A549 (cell line): ENCODE measurements at regions of chr19 and their contacts with region 1.

Region 1: DNA sequence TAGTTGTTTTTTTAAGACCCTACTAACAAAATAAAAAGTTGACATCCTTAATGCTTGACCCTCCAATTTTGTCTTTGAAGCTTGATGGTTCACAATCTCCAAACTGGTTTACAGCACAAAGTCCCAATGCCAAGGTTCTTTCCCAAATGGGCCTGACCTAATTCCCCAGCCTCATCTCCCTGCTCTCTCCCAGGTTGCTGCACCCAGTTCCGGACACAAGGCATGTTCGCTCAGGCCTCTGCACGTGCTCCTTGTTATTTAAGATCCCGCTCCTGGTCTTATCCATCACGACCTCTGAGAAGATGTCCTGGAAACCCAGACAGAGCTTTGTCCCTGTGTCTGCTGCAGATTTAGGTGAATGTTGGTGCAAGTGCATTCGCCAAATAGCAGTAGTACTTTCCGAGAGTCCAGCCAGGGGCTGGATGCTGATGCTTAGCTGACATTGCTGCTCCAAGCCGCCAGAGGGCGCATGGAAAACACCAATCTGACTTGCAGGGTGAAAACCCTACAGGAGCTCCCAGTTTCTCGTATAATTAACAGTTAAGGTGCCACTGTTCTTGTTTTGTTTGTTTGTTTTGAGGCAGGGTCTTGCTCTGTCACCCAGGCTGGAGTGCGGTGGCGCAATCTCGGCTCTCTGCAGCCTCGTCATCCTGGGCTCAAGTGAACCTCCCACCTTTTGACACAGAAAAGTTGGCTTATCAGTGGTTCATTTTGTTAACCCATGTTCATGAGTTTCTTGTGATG is 18.5 kb downstream of the LYPD3 start:
- DNase-seq: peak; percentile 80 to 86
- ATAC-seq: peak; percentile 95 to 96
- H3K4me3 ChIP-seq: no peak overlapping the region
- H3K27ac ChIP-seq: no peak overlapping the region
- H3K4me1 ChIP-seq: no peaks in the 10 kb centered on the region
- CTCF ChIP-seq: peak; percentile 98
- EP300 ChIP-seq: no peak
- POLR2A ChIP-seq: no peak
- RAD21 ChIP-seq: peak; percentile 95 to 96

Region 2: DNA sequence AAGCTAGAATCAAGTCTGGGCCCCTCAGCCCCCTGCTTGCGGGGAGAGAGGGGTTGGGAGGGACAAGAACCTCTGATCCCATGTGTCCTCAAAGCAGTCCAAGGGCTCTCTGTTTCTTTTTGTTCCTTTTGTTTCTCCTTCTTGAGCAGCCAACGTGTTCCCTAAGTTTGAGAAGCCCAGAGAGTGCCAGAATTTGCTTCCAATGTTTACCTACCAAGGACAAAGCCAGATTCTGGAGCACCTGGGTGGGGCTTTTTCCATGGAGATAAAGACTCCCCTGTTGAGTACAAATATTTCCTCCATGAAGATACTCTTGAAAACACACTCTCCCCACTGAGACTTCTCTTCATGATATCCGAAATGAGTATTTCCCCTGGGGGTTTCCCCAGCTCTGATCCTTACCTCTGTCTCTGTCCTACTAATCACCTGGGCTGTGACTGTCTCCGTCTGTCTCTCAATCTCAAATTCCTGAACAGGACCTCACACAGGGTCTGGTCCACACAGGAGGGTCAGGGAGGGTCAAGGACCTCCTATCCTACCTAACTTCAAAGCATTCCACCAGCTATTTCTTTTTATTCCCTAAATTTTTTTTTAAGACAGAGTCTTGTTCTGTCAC is 66.0 kb before region 1 on chr19:
- CTCF ChIA-PET with region 1: no interaction called
- POLR2A ChIA-PET with region 1: no interaction called
- DNase-seq: no peak
- ATAC-seq: no peak
- H3K4me3 ChIP-seq: no peak overlapping the region
- H3K27ac ChIP-seq: no peak overlapping the region
- H3K4me1 ChIP-seq: no peaks in the 10 kb centered on the region
- CTCF ChIP-seq: no peak
- EP300 ChIP-seq: no peak
- POLR2A ChIP-seq: no peak
- RAD21 ChIP-seq: no peak

Region 3: DNA sequence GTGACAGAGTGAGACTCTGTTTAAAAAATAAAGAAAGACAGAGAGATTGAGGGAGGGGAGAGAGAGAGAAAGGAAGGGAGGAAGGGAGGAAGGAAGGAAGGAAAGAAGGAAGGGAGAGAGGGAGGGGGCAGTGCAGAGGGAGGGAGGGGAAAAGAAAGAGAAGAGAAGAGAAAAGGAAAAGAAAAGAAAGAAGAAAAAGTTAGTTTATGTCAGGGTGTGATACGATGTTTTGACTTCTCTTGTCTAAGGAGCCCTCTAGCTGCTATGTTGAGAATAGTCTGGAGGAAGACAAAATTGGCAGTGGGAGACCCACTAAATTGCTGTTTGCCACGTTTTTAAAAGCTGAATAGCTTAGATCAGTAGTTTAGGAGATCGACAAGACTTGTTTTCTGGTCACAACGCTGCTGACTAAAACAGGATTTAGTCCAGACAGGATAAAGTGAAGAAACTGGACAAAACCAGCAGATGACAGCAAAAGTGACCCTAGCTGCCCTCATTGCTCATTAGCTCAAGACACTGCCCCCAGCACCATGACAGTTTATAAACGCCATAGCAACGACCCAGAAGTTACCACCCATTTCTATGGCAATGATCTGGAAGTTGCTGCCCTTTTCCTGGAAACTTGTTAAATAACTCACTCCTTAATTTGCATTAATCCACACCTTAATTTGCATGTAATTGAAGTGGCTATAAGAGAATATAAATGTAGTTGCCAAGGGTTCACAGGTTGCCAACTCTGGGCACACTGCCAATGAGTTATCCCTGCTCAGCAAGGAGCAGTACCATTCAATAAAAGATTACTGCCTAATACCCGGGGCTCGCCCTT is 21.1 kb before region 1 on chr19:
- CTCF ChIA-PET with region 1: interaction called, 105 read pairs
- POLR2A ChIA-PET with region 1: no interaction called
- DNase-seq: peak in 1 of 2 experiments; percentile 35
- ATAC-seq: peak; percentile 89 to 92; a peak in 5 of 6 replicates
- H3K4me3 ChIP-seq: no peak overlapping the region
- H3K27ac ChIP-seq: no peak overlapping the region
- H3K4me1 ChIP-seq: no peaks in the 10 kb centered on the region
- CTCF ChIP-seq: peak; percentile 79
- EP300 ChIP-seq: no peak
- POLR2A ChIP-seq: no peak
- RAD21 ChIP-seq: peak; percentile 69 to 70

Region 4: DNA sequence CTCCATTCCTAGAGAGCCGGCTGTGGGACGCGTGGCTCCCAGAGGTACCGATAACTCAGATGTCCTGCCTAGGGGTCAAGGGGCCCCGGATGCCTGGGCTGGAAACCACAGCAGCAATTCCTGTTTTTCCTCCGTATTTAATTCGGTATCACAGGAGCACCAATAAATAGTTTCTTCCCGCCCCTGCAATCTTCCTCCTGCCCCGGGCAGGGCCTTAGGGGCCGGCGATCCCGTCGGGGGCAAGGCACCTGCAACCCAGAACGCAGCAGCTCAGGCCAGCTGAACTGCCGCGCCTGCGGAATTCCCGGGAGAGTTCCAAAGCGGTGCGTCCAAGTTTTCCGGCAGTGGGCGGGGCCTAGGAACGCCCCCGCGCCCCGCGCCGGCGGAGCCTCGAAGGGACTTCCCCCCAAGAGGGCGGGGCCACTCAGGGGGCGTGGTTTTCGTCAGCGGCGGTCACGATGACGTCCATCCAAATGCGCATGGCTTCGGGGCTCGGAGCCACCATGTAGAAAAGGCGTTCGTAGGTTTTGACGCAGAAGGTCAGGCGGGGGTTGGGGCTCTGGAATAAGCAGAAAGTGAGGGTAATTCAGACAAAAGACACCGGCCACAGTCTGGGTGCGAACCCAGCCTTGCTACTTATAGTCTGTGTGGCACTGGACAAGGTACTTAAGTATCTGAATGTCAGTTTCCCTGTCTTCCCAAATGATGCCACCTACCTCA is 28.2 kb after region 1 on chr19:
- CTCF ChIA-PET with region 1: interaction called, 36 read pairs
- POLR2A ChIA-PET with region 1: no interaction called
- DNase-seq: peak; percentile 96 to 99
- ATAC-seq: peak; percentile 82 to 92
- H3K4me3 ChIP-seq: peak overlapping the region; percentile 34
- H3K27ac ChIP-seq: peak overlapping the region; percentile 69 to 82
- H3K4me1 ChIP-seq: 0 out of 3 replicates have a peak, but pooled peaks cover 4% of the 10 kb centered on the region
- CTCF ChIP-seq: no peak
- EP300 ChIP-seq: no peak
- POLR2A ChIP-seq: peak; percentile 72
- RAD21 ChIP-seq: no peak

Region 5: DNA sequence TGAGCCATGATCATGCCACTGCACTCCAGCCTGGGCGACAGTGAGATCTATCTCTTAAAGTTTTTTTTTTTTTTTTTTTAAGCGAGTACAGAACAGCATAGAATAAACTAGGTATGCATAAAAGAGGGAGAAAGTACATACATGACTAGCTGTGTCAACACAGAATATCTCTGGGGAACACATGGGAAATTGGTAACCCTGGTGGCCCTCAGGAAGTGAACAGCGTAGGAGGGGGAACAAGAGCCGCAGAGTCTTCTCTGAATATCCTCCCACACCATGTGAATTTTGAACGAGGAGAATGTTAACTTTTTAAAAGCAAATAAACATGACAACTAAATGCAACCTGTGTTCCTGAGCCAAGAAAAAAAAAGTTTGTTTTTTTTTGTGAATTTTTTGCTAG is 42.4 kb after region 1 on chr19:
- CTCF ChIA-PET with region 1: interaction called, 89 read pairs
- POLR2A ChIA-PET with region 1: no interaction called
- DNase-seq: no peak
- ATAC-seq: no peak
- H3K4me3 ChIP-seq: no peak overlapping the region
- H3K27ac ChIP-seq: no peak overlapping the region
- H3K4me1 ChIP-seq: no peaks in the 10 kb centered on the region
- CTCF ChIP-seq: no peak
- EP300 ChIP-seq: no peak
- POLR2A ChIP-seq: no peak
- RAD21 ChIP-seq: no peak

Region 6: DNA sequence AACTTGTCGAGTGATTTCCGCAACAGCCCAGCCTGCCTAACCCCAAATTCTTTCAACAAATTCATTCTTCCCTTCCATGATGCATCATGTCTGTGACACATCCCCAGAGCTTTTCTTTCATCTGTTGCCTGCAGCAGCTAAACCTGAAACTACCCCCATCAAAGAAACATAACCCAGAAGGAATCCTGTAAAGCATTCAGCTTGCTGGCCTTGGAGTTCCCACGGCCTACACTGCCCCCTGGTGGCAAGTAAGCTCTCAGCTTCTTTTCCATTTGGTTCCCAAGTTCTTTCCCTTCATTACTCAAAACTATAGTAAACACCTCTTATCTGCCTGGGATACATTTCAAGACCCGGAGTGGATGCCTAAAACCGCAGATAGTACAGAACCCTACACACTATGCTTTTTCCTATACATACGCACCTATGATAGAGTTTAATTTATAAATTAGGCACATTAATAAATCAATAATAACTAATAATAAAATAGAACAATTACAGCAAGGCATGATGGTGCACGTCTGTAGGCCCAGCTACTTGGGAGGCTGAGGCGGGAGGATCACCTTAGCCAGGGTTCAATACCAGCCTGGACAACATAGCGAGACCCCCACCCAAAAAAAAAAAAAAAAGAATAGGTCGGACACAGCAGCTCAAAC is 72.6 kb after region 1 on chr19:
- CTCF ChIA-PET with region 1: interaction called, 462 read pairs
- POLR2A ChIA-PET with region 1: interaction called, 15 read pairs
- DNase-seq: peak; percentile 81 to 92
- ATAC-seq: peak; percentile 87 to 88
- H3K4me3 ChIP-seq: no peak overlapping the region
- H3K27ac ChIP-seq: no peak overlapping the region
- H3K4me1 ChIP-seq: peaks cover 16% of the 10 kb centered on the region; the same call in 2 of the 3 replicates
- CTCF ChIP-seq: peak; percentile 99
- EP300 ChIP-seq: no peak
- POLR2A ChIP-seq: no peak
- RAD21 ChIP-seq: peak; percentile 97 to 98

Region 7: GRCh38 chr19:43555185-43555770 is 108.4 kb after region 1 on chr19:
- CTCF ChIA-PET with region 1: interaction called, 21 read pairs
- POLR2A ChIA-PET with region 1: no interaction called
- DNase-seq: peak; percentile 78 to 87
- ATAC-seq: peak; percentile 87 to 94
- H3K4me3 ChIP-seq: no peak overlapping the region
- H3K27ac ChIP-seq: no peak overlapping the region
- H3K4me1 ChIP-seq: no peaks in the 10 kb centered on the region
- CTCF ChIP-seq: peak; percentile 81
- EP300 ChIP-seq: no peak
- POLR2A ChIP-seq: no peak
- RAD21 ChIP-seq: peak; percentile 55 to 77

Region 8: DNA sequence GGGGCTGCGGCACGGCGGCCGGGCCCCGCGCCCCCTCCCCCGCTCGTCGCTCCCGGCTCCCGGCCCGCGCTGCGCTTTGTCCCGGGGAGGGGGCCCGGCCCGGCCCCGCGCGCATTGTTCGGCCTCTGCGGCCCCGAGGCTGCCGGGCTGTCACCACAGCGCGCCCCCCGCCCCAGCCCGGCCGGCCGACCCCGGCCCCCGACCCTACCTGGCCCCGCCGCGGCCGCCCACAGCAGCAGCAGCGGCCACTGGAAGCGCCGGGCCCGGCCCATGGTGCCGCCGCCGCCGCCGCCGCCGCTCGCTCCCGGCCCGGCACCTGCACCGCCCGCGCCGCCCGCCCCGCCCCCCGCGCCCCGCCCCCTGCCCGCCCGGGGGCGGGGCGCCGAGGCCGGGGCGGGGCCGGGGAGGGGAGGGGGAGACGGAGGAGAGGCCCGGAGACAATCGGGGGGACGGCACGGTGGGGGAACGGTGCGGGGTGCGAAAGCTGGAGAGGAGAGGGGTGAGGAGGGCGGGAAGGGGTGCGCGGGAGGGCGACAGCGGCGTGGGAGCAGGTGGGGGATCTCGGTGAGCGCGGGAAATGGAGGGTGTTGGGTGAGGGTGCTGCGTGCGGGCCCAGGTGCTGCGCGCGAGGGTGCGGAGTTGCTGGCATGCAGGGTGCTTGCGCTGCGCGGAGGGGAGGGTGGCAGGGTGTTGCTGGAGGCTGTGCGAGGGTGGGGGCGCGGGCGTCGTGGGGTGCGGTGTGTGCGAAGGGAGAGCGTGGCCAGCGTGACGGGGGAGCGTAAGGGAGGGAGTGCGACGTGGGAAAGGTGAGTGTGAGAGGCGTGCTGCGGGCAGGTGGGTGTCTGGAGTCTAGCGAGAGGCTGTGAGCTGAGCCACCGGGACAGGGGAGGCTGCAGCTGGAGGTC is 192.9 kb after region 1 on chr19 and contains the start of gene CADM4:
- CTCF ChIA-PET with region 1: no interaction called
- POLR2A ChIA-PET with region 1: no interaction called
- DNase-seq: no peak
- ATAC-seq: peak; percentile 51 to 59
- H3K4me3 ChIP-seq: peak within 1 kb of the TSS; percentile 82
- H3K27ac ChIP-seq: peak within 1 kb of the TSS; percentile 77 to 95
- H3K4me1 ChIP-seq: peaks cover 22% of the 10 kb centered on the region
- CTCF ChIP-seq: no peak
- EP300 ChIP-seq: no peak
- POLR2A ChIP-seq: no peak
- RAD21 ChIP-seq: no peak
- polyA plus RNA-seq, gene CADM4: 4.2 and 4.7 TPM in 2 replicates

Region 9: GRCh38 chr19:43809762-43810696 is 363.1 kb after region 1 on chr19:
- CTCF ChIA-PET with region 1: interaction called, 13 read pairs
- POLR2A ChIA-PET with region 1: no interaction called
- DNase-seq: peak; percentile 46 to 82
- ATAC-seq: peak; percentile 74 to 90
- H3K4me3 ChIP-seq: no peak overlapping the region
- H3K27ac ChIP-seq: no peak overlapping the region
- H3K4me1 ChIP-seq: no peaks in the 10 kb centered on the region
- CTCF ChIP-seq: peak; percentile 75
- EP300 ChIP-seq: no peak
- POLR2A ChIP-seq: no peak
- RAD21 ChIP-seq: peak; percentile 72 to 90